Dendritic cell treated with granulocyte-macrophage colony-stimulating factor and Interleukin-4, amounts not matched to agents 40 ng/mL and 50 ng/mL, for 4 days (primary cell): ENCODE measurements at regions of chr9 and their contacts with region 1.

Region 1: GRCh38 chr9:68704814-68705530 is at the start of gene PIP5K1B:
- H3K4me3 Mint-ChIP-seq: peak within 1 kb of the TSS; percentile 93
- H3K27ac Mint-ChIP-seq: peak within 1 kb of the TSS; percentile 84
- H3K4me1 Mint-ChIP-seq: peaks cover 33% of the 10 kb centered on the region
- H3K27me3 Mint-ChIP-seq: peaks cover 43% of the 10 kb centered on the region

Region 2: GRCh38 chr9:68584189-68585033 is 120.6 kb before region 1 on chr9:
- intact Hi-C with region 1: loop called (anchors 10 kb)
- H3K4me3 Mint-ChIP-seq: no peak overlapping the region
- H3K27ac Mint-ChIP-seq: no peak overlapping the region
- H3K4me1 Mint-ChIP-seq: peaks cover 15% of the 10 kb centered on the region
- H3K27me3 Mint-ChIP-seq: peaks cover 3% of the 10 kb centered on the region

Region 3: GRCh38 chr9:68779558-68780384 is 74.8 kb after region 1 on chr9:
- intact Hi-C with region 1: loop called (anchors 5 kb)
- H3K4me3 Mint-ChIP-seq: no peak overlapping the region
- H3K27ac Mint-ChIP-seq: no peak overlapping the region
- H3K4me1 Mint-ChIP-seq: peaks cover 5% of the 10 kb centered on the region
- H3K27me3 Mint-ChIP-seq: no peaks in the 10 kb centered on the region

Region 4: GRCh38 chr9:68844631-68845612 is 139.9 kb after region 1 on chr9:
- intact Hi-C with region 1: loop called (anchors 10 kb)
- H3K4me3 Mint-ChIP-seq: peak overlapping the region; percentile 79
- H3K27ac Mint-ChIP-seq: peak overlapping the region; percentile 86
- H3K4me1 Mint-ChIP-seq: peaks cover 45% of the 10 kb centered on the region
- H3K27me3 Mint-ChIP-seq: no peaks in the 10 kb centered on the region